Activated CD4-positive, alpha-beta T cell treated with anti-CD3 and anti-CD28 coated beads, Interleukin-2, amount 10 ng/mL, durations not matched to agents 7 days and 5 days (primary cell): ENCODE measurements at regions of chr7 and their contacts with region 1.

Region 1: DNA sequence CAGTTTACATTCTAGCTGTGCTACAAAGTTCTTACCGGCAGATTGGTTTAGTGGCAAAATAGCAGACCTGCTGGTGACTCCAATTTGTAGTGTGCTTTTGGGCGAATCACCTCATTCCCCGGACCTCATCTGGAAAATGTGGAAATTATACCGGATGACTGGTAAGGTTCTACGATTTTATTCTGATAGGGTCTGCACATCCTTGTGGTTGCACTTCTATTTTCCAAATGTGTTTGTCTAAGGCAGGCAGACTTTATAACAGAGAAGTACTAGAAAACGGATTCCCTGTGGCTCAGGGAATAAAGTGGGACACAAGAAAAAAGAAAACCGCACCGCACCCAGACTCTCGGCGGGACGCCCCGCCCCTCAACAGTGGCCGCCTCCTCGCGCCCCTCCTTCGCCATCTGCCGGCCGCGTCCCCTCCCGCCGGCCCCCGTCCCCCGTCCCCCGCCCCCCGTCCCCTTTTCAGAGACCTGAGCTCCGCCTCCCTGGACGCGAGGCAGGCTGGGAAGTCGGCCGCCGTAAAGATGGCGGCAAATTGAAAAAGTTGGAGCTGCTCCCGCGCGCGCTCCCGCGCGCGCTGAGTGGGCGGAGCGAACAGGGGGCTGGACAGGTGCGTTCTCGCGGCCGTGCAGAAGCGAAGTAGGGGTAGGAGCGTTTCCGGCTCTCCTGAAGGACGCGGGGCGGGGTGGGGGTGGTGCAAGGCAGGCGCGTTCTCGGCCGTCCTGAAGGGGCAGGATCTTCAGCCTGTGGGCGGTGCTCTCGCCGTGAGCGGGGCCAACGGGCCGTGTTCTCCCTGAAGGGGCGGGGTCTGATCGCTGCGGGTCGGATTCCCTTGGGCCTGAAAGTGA is 531 bp upstream of the CCM2 start:
- DNase-seq: peak; percentile 100
- H3K4me3 Mint-ChIP-seq: peak overlapping the region; percentile 86
- H3K27ac Mint-ChIP-seq: peak overlapping the region; percentile 90
- H3K4me1 Mint-ChIP-seq: peaks cover 64% of the 10 kb centered on the region
- H3K27me3 Mint-ChIP-seq: no peaks in the 10 kb centered on the region

Region 2: GRCh38 chr7:44980393-44981034 is 19.0 kb before region 1 on chr7:
- CTCF ChIA-PET with region 1: interaction called, 16 read pairs
- POLR2A ChIA-PET with region 1: interaction called, 3 read pairs
- DNase-seq: peak; percentile 47
- H3K4me3 Mint-ChIP-seq: peak overlapping the region; percentile 98
- H3K27ac Mint-ChIP-seq: peak overlapping the region; percentile 95
- H3K4me1 Mint-ChIP-seq: peaks cover 77% of the 10 kb centered on the region
- H3K27me3 Mint-ChIP-seq: no peaks in the 10 kb centered on the region

Region 3: DNA sequence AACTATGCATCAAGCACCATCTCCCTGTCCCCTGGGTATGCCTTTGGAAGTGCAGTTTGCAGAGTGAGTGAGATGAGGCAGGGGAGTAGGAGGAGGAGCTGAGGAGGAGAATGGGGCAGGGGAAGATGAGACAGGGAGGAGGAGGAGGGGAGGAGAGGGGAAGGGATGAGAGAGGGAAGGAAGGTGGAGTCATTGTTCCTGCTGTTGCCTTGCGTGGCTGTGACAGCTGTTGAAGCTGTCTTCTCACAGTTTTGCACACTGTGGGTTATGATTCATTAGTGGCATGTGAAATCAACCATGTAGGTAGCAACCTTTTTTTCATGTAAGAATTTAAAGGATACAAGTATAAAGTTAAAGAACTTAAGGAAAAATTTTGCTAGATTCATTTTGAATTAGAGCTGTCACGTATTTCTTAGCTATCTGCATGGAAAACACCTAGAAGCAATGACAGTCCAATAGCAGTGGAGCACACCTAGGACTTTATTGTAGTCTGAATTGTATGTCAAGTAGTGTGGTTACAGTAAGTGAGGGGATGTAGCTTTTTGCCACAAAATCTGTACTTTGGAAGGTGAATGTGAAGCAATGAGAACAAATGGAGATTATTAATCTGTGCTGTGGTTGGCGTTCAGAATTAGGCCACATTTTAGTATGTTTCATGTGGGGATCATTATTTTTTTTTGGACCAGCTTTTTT is 22.3 kb after region 1 on chr7:
- CTCF ChIA-PET with region 1: interaction called, 10 read pairs
- POLR2A ChIA-PET with region 1: interaction called, 3 read pairs
- DNase-seq: no peak
- H3K4me3 Mint-ChIP-seq: no peak overlapping the region
- H3K27ac Mint-ChIP-seq: peak overlapping the region; percentile 74
- H3K4me1 Mint-ChIP-seq: peaks cover 57% of the 10 kb centered on the region
- H3K27me3 Mint-ChIP-seq: no peaks in the 10 kb centered on the region

Region 4: GRCh38 chr7:45146531-45147379 is 147.3 kb after region 1 on chr7:
- CTCF ChIA-PET with region 1: no interaction called
- POLR2A ChIA-PET with region 1: no interaction called
- DNase-seq: no peak
- H3K4me3 Mint-ChIP-seq: no peak overlapping the region
- H3K27ac Mint-ChIP-seq: no peak overlapping the region
- H3K4me1 Mint-ChIP-seq: no peaks in the 10 kb centered on the region
- H3K27me3 Mint-ChIP-seq: peaks cover 11% of the 10 kb centered on the region